SK-MEL-5 (cell line): ENCODE measurements at regions of chr7 and their contacts with region 1.

Region 1: GRCh38 chr7:33040803-33041516 is 21.6 kb downstream of the NT5C3A start:
- DNase-seq: peak; percentile 76

Region 2: DNA sequence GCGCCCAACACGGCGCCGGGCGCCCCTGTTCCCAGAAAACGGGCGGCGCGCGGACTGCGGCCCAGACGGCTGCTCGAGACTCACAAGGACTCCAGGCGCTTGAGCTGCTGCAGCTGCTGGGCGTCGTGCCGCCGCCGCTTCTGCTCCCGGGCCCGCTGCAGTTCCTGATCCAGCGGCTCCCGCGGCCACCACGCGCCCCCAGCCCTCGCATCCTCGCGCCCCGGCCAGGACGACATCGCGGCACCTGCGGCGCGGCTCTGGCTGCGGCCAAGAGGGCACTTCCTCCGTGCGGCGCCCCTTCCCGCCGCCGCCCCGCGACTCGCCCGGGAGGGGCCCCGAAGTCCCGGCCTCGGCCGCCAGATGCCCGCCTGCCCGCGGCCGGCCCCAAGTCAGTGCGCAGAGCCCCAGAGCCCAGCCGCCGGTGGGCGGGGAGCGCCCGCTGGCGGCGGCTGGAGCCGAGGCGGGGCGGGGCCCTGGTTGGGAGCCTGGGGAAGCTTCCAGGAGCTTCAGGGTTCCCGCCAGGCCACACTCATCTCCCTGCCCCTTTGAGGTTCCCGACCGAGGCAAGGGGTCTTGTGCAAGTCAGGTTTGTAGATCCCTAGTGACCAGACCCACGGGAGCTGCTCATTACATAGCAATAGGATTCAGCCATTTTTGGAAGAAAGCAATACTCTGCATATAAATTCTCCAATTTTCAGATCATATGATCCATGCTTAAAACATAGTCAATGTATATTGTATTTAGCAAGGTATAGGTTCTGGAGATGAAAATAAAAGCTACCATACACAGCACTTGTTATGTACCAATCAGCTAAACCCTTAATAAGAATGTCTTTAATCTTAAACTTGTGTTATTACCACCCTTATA is 97.9 kb before region 1 on chr7:
- in situ Hi-C with region 1: loop called (anchors 10 kb)
- DNase-seq: peak; percentile 81